CD8-positive, alpha-beta T cell (primary cell): ENCODE measurements at regions of chr21 and their contacts with region 1.

Region 1: GRCh38 chr21:33924079-33924765 is 8.6 kb upstream of the ATP5PO start:
- DNase-seq: peak; percentile 78 to 97 (median 90)
- ATAC-seq: peak; percentile 95
- H3K4me3 ChIP-seq: no peak overlapping the region
- H3K4me3 Mint-ChIP-seq: peak overlapping the region; percentile 5
- H3K27ac ChIP-seq: no peak overlapping the region
- H3K27ac Mint-ChIP-seq: peak overlapping the region; percentile 77
- H3K4me1 ChIP-seq: peaks cover 11% of the 10 kb centered on the region
- H3K4me1 Mint-ChIP-seq: peaks cover 11% of the 10 kb centered on the region
- H3K27me3 ChIP-seq: no peaks in the 10 kb centered on the region
- H3K27me3 Mint-ChIP-seq: no peaks in the 10 kb centered on the region
- CTCF ChIP-seq: peak; percentile 79

Region 2: GRCh38 chr21:33608559-33608958 is 315.7 kb before region 1 on chr21:
- CTCF ChIA-PET with region 1: no interaction called
- POLR2A ChIA-PET with region 1: no interaction called
- intact Hi-C with region 1: no loop called
- DNase-seq: no peak
- ATAC-seq: no peak
- H3K4me3 ChIP-seq: no peak overlapping the region
- H3K4me3 Mint-ChIP-seq: no peak overlapping the region
- H3K27ac ChIP-seq: no peak overlapping the region
- H3K27ac Mint-ChIP-seq: no peak overlapping the region
- H3K4me1 ChIP-seq: no peaks in the 10 kb centered on the region
- H3K4me1 Mint-ChIP-seq: peaks cover 3% of the 10 kb centered on the region
- H3K27me3 ChIP-seq: no peaks in the 10 kb centered on the region
- H3K27me3 Mint-ChIP-seq: no peaks in the 10 kb centered on the region
- CTCF ChIP-seq: no peak

Region 3: DNA sequence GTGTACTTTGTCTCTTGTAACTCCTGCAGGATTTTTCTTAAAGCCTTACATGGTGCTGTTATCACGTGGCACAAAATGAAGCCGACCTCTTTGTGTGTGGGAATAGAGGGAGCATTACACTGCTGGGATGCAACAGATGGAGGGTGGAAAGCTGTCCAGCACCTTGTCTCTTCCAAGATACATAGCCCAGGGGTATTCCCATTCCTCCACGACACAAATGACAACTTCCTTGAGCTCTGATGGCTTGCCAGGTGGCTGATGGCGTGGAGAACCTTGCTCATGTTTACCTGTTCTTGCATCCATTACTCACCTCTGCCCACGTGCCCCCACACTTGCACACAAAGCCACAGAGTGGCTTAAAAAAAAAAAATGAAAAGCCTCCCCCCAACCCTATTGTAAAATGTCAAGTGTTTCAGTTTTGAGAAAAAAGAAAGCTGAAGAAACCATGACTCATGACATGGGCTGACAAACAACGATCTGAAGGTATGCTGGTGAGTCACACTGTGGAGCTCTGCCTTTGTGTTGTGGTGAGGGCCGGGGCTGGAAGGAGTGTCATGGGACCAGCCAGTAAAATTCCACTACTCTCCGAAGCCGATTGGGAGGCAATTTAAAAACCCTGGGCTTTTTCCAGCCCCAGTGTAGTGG is 23.4 kb after region 1 on chr21:
- CTCF ChIA-PET with region 1: interaction called, 43 read pairs
- POLR2A ChIA-PET with region 1: interaction called, 38 read pairs
- intact Hi-C with region 1: loop called (anchors 2 kb)
- DNase-seq: peak; percentile 64 to 97 (median 82)
- ATAC-seq: peak; percentile 56
- H3K4me3 ChIP-seq: peak overlapping the region; percentile 18 to 25
- H3K4me3 Mint-ChIP-seq: peak overlapping the region; percentile 75
- H3K27ac ChIP-seq: peak overlapping the region; percentile 94 to 95
- H3K27ac Mint-ChIP-seq: peak overlapping the region; percentile 99
- H3K4me1 ChIP-seq: peaks cover 66% of the 10 kb centered on the region
- H3K4me1 Mint-ChIP-seq: peaks cover 78% of the 10 kb centered on the region
- H3K27me3 ChIP-seq: no peaks in the 10 kb centered on the region
- H3K27me3 Mint-ChIP-seq: no peaks in the 10 kb centered on the region
- CTCF ChIP-seq: no peak

Region 4: GRCh38 chr21:33993286-33994231 is 69.3 kb after region 1 on chr21:
- CTCF ChIA-PET with region 1: interaction called, 10 read pairs
- POLR2A ChIA-PET with region 1: no interaction called
- intact Hi-C with region 1: no loop called
- DNase-seq: no peak
- ATAC-seq: no peak
- H3K4me3 ChIP-seq: no peak overlapping the region
- H3K4me3 Mint-ChIP-seq: no peak overlapping the region
- H3K27ac ChIP-seq: no peak overlapping the region
- H3K27ac Mint-ChIP-seq: no peak overlapping the region
- H3K4me1 ChIP-seq: peaks cover 6% of the 10 kb centered on the region
- H3K4me1 Mint-ChIP-seq: peaks cover 14% of the 10 kb centered on the region
- H3K27me3 ChIP-seq: no peaks in the 10 kb centered on the region
- H3K27me3 Mint-ChIP-seq: no peaks in the 10 kb centered on the region
- CTCF ChIP-seq: no peak

Region 5: DNA sequence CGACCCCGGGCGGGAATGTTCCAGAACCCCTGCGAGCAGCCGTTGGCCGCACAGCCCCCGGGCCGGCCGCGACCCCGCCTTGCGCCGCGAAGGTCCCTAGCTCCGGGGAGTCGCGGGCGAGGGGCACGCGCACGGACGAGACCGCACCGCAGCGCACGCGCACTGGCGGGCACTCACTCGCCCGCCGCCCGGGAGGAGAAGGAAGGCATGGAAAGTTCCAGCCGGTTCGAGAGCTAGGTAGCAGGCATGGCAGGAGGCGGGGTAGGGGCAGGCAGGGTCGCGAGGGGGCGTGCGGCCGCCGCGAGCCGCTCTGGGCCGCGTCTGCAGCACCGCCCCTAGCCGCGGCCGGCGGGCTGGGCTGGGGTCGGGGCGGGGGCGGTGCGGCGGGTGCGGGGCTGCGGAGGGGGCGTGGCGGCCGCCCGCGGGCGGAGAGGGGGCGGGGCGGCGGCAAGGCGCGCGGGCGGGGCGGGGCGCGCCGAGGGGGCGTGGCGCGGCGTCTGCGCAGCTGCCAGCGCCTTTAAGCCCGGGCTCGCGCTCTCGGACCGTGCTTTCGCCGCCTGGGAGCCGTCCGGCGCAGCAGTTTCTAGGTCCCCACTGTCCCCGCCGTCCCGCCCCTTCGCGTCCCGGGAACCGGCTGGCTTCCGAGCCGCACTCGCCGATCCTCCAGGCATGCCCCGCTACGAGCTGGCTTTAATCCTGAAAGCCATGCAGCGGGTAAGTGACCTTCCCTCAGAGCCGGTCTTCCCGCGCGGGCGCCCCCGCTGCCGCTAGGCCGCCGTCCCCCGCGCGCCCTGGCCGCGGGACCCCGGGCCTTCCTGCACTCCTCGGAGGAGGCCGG is 149.0 kb after region 1 on chr21 and contains the starts of genes MRPS6 and SLC5A3:
- CTCF ChIA-PET with region 1: interaction called, 29 read pairs
- POLR2A ChIA-PET with region 1: interaction called, 12 read pairs
- intact Hi-C with region 1: loop called (anchors 2 kb)
- DNase-seq: peak; percentile 37 to 85 (median 72)
- ATAC-seq: peak; percentile 79
- H3K4me3 ChIP-seq: peak within 1 kb of the TSS; percentile 76 to 84
- H3K4me3 Mint-ChIP-seq: peak within 1 kb of the TSS; percentile 94
- H3K27ac ChIP-seq: peak within 1 kb of the TSS; percentile 67 to 72
- H3K27ac Mint-ChIP-seq: peak within 1 kb of the TSS; percentile 94
- H3K4me1 ChIP-seq: peaks cover 39% of the 10 kb centered on the region
- H3K4me1 Mint-ChIP-seq: peaks cover 47% of the 10 kb centered on the region
- H3K27me3 ChIP-seq: no peaks in the 10 kb centered on the region
- H3K27me3 Mint-ChIP-seq: no peaks in the 10 kb centered on the region
- CTCF ChIP-seq: no peak
- total RNA-seq, gene MRPS6: 14.3 to 15.4 TPM
- total RNA-seq, gene SLC5A3: 4.6 to 5.2 TPM

Region 6: DNA sequence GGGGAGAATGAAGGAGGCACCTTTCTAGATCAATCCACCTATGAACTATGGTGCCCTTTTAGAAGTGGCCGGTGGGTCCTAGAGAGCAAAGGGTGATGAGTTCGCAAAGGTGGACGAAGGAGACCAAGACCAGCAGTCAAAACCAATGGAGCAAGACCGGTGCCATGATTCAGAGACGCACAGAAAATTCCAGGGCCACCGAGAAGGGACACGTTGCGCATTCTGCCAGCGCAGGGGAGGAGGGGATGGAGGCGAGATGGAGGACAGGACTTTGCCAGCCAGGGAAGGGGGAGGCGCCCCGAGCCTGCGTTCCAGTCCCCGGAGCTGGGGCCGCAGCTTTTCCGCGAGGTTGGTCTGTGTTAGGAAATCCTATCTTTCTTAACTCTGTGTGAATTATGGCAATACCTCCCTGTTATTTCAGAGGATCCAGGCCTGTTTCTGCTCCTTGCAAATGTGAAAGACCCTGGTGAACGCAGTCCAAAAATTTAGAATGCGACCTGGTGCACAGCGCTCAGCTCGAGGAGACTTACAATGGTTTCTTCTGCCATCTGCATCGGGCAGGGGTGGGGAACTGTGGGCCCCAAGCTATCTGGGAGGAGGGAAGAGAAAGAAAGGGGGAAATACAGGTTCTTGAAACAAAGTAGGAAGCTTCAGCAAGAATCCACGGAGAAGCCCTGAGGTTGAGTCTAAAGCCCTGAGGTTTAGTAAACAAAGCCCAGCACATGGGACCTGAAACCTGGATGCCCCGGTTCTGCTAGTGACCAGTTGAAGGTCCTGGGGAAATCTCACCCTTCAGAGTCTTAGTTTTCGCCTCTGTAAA is 278.5 kb after region 1 on chr21:
- CTCF ChIA-PET with region 1: interaction called, 31 read pairs
- POLR2A ChIA-PET with region 1: interaction called, 3 read pairs
- intact Hi-C with region 1: loop called (anchors 2 kb)
- DNase-seq: no peak
- ATAC-seq: no peak
- H3K4me3 ChIP-seq: peak overlapping the region; percentile 46 to 56
- H3K4me3 Mint-ChIP-seq: peak overlapping the region; percentile 81
- H3K27ac ChIP-seq: no peak overlapping the region
- H3K27ac Mint-ChIP-seq: no peak overlapping the region
- H3K4me1 ChIP-seq: peaks cover 30% of the 10 kb centered on the region
- H3K4me1 Mint-ChIP-seq: peaks cover 41% of the 10 kb centered on the region
- H3K27me3 ChIP-seq: no peaks in the 10 kb centered on the region
- H3K27me3 Mint-ChIP-seq: no peaks in the 10 kb centered on the region
- CTCF ChIP-seq: no peak

Region 7: GRCh38 chr21:34351786-34352241 is 427.6 kb after region 1 on chr21:
- CTCF ChIA-PET with region 1: interaction called, 256 read pairs
- POLR2A ChIA-PET with region 1: interaction called, 27 read pairs
- intact Hi-C with region 1: no loop called
- DNase-seq: peak in 3 of 9 experiments; percentile 9 to 56 (median 41)
- ATAC-seq: peak; percentile 63
- H3K4me3 ChIP-seq: no peak overlapping the region
- H3K4me3 Mint-ChIP-seq: no peak overlapping the region
- H3K27ac ChIP-seq: no peak overlapping the region
- H3K27ac Mint-ChIP-seq: no peak overlapping the region
- H3K4me1 ChIP-seq: no peaks in the 10 kb centered on the region
- H3K4me1 Mint-ChIP-seq: peaks cover 10% of the 10 kb centered on the region
- H3K27me3 ChIP-seq: no peaks in the 10 kb centered on the region
- H3K27me3 Mint-ChIP-seq: peaks cover 18% of the 10 kb centered on the region
- CTCF ChIP-seq: no peak

Region 8: GRCh38 chr21:35294231-35294898 is 1370.1 kb after region 1 on chr21:
- CTCF ChIA-PET with region 1: no interaction called
- POLR2A ChIA-PET with region 1: no interaction called
- intact Hi-C with region 1: no loop called
- DNase-seq: no peak
- ATAC-seq: no peak
- H3K4me3 ChIP-seq: no peak overlapping the region
- H3K4me3 Mint-ChIP-seq: no peak overlapping the region
- H3K27ac ChIP-seq: no peak overlapping the region
- H3K27ac Mint-ChIP-seq: no peak overlapping the region
- H3K4me1 ChIP-seq: no peaks in the 10 kb centered on the region
- H3K4me1 Mint-ChIP-seq: peaks cover 12% of the 10 kb centered on the region
- H3K27me3 ChIP-seq: no peaks in the 10 kb centered on the region
- H3K27me3 Mint-ChIP-seq: no peaks in the 10 kb centered on the region
- CTCF ChIP-seq: no peak